H1 (cell line): ENCODE measurements at regions of chr2 and their contacts with region 1.

Region 1: GRCh38 chr2:24046930-24047702 is at the start of gene WDCP:
- DNase-seq: peak; percentile 82 to 94
- H3K4me3 ChIP-seq: peak within 1 kb of the TSS; percentile 73 to 95 (median 84)
- H3K27ac ChIP-seq: peak within 1 kb of the TSS; percentile 53; the same call in 1 of the 2 replicates
- H3K4me1 ChIP-seq: peaks cover 5 to 12% (median 6%) of the 10 kb centered on the region in 4 experiments; a peak in 5 of 7 replicates
- H3K27me3 ChIP-seq: no peaks in the 10 kb centered on the region
- CTCF ChIP-seq: no peak
- EP300 ChIP-seq: no peak
- POLR2A ChIP-seq: peak; percentile 49 to 88
- RAD21 ChIP-seq: no peak
- total RNA-seq, gene WDCP: 37.6 and 40.1 TPM in 2 replicates

Region 2: DNA sequence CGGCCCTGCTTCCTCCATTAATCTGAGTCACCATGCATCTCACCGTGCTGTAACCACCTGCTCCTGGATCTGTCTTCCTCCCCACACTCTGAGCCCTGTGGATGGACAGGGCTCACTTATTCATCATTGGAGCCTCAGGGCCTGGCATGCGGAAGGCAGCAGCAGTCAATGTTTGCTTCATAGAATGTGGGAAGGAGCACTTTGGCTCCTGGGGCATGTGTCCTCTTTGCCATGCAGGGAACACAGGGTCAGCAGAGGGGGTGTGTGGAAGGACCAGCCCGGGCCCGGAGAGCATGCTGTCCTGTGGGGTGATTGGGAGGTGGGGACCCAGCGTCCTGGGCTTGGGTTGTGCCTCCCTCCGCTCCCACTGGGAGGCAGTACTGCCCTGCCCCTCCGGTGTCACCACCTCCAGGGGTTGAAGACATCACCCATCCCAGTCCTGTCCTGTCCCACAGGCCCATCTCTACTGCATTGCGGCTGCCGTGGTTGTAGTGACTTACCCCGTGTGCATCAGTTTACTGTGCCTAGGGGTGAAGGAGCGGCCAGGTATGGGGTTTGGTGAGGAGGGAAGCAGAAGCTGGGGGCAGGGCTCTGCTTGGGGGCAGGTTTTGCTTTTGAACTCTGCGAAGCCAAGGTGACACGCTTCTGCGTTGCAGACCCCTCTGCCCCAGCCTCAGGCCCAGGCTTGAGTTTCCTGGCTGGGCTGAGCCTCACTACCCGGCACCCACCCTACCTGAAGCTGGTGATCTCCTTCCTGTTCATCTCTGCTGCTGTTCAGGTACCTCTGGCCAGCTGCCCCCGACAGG is 25.7 kb before region 1 on chr2:
- CTCF ChIA-PET with region 1: interaction called, 7 read pairs
- POLR2A ChIA-PET with region 1: interaction called, 13 read pairs
- DNase-seq: peak; percentile 43 to 83
- H3K4me3 ChIP-seq: no peak overlapping the region
- H3K27ac ChIP-seq: no peak overlapping the region
- H3K4me1 ChIP-seq: peaks cover 11 to 38% (median 18%) of the 10 kb centered on the region in 4 experiments
- H3K27me3 ChIP-seq: no peaks in the 10 kb centered on the region
- CTCF ChIP-seq: peak in 2 of 3 experiments; percentile 85 to 93; a peak in 3 of 4 replicates
- EP300 ChIP-seq: no peak
- POLR2A ChIP-seq: peak in 1 of 2 experiments; percentile 18; a peak in 1 of 3 replicates
- RAD21 ChIP-seq: peak; percentile 93 to 95

Region 3: GRCh38 chr2:24075915-24076848 is 29.1 kb after region 1 on chr2 and contains the start of gene SF3B6:
- CTCF ChIA-PET with region 1: interaction called, 7 read pairs
- POLR2A ChIA-PET with region 1: interaction called, 22 read pairs
- DNase-seq: peak; percentile 100
- H3K4me3 ChIP-seq: peak within 1 kb of the TSS; percentile 74 to 96 (median 94)
- H3K27ac ChIP-seq: peak within 1 kb of the TSS; percentile 87
- H3K4me1 ChIP-seq: peaks cover 0 to 7% (median 2%) of the 10 kb centered on the region in 4 experiments; a peak in 4 of 7 replicates
- H3K27me3 ChIP-seq: no peaks in the 10 kb centered on the region
- CTCF ChIP-seq: no peak
- EP300 ChIP-seq: peak in 1 of 2 experiments; percentile 85; a peak in 1 of 3 replicates
- POLR2A ChIP-seq: peak in 1 of 2 experiments; percentile 89; a peak in 2 of 3 replicates
- RAD21 ChIP-seq: peak in 1 of 2 experiments; percentile 17; a peak in 2 of 4 replicates
- total RNA-seq, gene SF3B6: 126 and 127 TPM in 2 replicates

Region 4: DNA sequence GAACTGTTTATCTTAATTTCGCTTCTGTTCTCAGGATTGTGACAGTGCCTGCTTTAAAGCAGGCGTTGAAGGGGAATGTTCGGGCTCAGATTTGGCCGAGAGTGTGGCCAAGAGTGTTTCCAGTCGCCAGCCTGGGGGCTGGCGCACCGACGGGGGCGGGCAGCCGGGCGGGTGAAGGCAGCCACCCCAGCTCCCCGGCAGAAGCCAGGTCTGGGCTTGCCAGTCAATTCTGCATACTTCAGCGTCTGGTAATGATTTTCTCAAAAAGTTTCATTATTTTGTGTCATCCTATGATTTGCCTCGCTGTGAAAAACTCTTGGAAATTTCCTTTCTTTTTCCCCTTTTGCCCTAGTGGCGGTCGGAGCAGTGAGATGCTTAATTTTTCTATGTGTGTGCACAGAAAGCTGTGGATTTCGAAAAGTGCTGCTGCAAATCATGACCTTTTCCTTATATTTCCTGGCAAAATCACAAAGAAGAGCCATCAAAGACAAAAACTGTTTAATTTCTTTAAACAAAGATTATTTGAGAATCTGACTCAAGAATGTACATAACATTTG is 128.6 kb after region 1 on chr2:
- CTCF ChIA-PET with region 1: no interaction called
- POLR2A ChIA-PET with region 1: no interaction called
- DNase-seq: no peak
- H3K4me3 ChIP-seq: no peak overlapping the region
- H3K27ac ChIP-seq: no peak overlapping the region
- H3K4me1 ChIP-seq: no peaks in the 10 kb centered on the region
- H3K27me3 ChIP-seq: no peaks in the 10 kb centered on the region
- CTCF ChIP-seq: no peak
- EP300 ChIP-seq: no peak
- POLR2A ChIP-seq: no peak
- RAD21 ChIP-seq: no peak

Region 5: DNA sequence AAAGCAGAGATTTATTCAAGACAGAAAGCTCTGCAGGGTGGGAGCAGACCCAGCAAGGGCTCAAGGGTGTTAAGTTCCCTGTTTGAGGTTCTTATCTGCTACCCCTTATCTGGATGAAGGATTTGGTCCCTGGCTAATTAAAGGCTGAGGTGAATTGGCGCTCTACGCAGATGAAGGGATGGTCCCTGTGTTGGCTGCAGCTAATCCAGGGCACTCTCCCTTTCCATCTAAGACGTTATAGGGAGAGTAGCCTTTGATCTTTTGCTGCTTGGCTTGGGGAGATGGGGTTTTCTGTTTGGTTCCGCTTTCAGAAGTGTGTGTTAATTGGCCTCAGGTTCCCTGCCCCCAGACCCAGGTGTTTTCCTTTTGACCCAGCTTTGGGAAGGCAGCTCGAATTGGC is 144.7 kb after region 1 on chr2:
- CTCF ChIA-PET with region 1: no interaction called
- POLR2A ChIA-PET with region 1: no interaction called
- DNase-seq: peak in 1 of 2 experiments; percentile 29
- H3K4me3 ChIP-seq: no peak overlapping the region
- H3K27ac ChIP-seq: no peak overlapping the region
- H3K4me1 ChIP-seq: no peaks in the 10 kb centered on the region
- H3K27me3 ChIP-seq: peaks cover 0 to 2% (median 0%) of the 10 kb centered on the region in 4 experiments; a peak in 3 of 7 replicates
- CTCF ChIP-seq: no peak
- EP300 ChIP-seq: no peak
- POLR2A ChIP-seq: no peak
- RAD21 ChIP-seq: no peak